Activated B cell treated with CpG ODN at 0.5 μM for 24 hours (primary cell): ENCODE measurements at regions of chr20 and their contacts with region 1.

Region 1: DNA sequence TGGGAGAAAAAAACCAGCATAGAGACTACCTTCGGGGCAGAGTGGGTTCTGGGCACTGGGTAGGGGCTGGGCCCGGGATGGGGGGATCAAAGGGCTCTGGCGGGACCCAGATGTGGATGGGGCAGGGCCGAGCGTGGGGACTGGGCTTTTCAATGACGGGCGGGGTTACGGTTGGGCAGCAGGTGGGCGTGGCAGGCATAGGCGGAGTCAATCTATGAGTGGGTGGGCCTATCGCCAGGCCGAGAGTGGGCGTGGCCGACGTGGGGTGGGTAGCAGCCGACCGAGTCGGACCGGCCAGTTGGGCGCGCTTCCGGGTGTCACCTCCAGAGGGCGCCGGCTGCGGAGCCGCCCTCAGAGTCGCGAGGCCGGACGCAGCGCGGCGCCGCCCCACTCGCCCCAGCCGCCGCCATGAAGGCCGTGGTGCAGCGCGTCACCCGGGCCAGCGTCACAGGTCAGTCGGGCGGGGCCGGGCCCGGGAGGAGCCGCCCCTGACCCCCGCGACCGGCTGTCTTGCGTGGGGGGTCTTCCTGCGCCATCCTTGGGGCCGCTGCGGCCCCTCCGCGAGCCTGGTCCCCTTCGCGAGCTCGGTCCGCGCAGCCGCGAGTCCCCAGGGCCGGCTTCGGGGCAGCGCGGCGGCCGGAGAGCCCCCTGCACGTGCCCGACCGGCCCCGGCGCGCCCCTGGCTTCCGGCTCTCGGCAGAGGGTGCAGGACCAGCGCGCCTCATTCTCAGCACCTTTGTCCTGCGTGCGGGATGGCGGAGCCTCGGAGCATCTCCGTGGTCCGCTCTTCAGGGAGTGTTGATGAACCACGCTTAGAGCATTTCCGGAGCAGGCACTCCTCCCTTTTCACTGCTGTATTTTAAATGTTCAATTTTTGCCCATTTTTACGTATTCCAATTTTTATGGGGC is at the start of gene DTD1:
- DNase-seq: peak; percentile 88
- ATAC-seq: peak; percentile 95
- H3K4me3 Mint-ChIP-seq: peak within 1 kb of the TSS; percentile 93
- H3K27ac Mint-ChIP-seq: peak within 1 kb of the TSS; percentile 90
- H3K4me1 Mint-ChIP-seq: peaks cover 24% of the 10 kb centered on the region
- H3K27me3 Mint-ChIP-seq: peaks cover 9% of the 10 kb centered on the region
- CTCF ChIP-seq: no peak
- total RNA-seq, gene DTD1: 26.3 and 27.5 TPM in 2 replicates

Region 2: DNA sequence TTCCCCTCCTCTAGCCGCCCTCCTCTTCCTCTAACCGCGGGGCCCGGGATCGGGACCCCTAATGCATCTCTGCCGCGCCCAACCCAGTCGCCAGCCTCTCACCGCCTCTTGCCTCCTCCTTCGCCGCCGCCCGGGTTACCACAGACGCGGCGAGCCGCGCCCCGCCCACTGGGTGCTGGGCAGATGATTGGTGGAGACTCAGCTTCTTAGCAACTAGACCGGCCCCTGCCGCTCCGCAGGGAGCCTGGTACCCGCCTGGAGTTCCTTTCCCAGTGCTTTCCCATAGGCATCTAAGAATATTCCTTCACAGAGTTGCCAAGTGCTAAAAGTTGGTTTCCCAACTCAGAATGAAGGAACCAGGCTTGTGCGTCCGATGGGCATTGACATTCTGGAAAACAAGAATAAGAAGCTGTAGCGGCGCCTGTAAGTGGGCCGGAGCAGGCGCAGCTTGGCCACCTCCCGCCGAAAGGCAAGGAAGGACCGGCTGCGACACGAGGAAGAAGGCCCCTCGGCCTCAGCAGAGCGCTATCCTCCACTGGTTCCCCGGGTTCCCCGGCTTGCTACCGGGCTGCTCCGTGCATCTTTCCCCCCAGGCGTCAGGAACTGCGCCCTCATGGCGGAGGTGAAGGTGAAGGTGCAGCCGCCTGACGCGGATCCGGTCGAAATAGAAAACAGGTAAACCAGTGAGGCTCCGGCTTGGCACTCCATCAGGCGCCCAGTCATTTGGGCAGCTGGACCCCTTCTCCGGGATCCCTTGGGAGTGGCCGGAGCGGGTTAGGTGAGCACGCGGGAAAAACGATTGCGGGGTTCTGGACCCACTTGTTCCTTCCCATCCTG is 120.8 kb before region 1 on chr20 and contains the starts of genes DZANK1 and POLR3F:
- CTCF ChIA-PET with region 1: no interaction called
- POLR2A ChIA-PET with region 1: interaction called, 3 read pairs
- intact Hi-C with region 1: loop called (anchors 1 kb)
- DNase-seq: peak; percentile 88
- ATAC-seq: peak; percentile 96
- H3K4me3 Mint-ChIP-seq: peak within 1 kb of the TSS; percentile 99
- H3K27ac Mint-ChIP-seq: peak within 1 kb of the TSS; percentile 95
- H3K4me1 Mint-ChIP-seq: peaks cover 27% of the 10 kb centered on the region
- H3K27me3 Mint-ChIP-seq: no peaks in the 10 kb centered on the region
- CTCF ChIP-seq: no peak
- total RNA-seq, gene DZANK1: 5.3 and 6.0 TPM in 2 replicates
- total RNA-seq, gene POLR3F: 13.3 and 14.5 TPM in 2 replicates

Region 3: DNA sequence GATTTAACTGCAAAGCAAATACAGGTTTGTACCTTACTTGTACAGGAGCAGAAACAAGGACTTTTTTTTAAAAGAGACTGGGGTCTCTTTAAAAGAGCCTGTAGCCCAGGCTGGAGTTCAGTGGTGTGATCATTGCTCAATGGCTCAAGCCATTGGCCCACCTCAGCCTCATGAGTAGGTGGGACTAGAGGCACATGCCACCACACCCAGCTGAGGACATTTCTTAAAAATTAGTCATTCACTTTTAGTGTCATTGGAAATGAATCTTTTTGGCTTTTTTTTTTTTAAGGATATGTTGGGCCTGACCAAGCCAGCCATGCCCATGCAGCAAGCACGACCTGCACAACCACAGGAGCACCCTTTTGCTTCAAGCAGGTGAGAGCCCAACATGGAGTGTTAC is 63.3 kb before region 1 on chr20:
- CTCF ChIA-PET with region 1: no interaction called
- POLR2A ChIA-PET with region 1: no interaction called
- intact Hi-C with region 1: no loop called
- DNase-seq: no peak
- ATAC-seq: no peak
- H3K4me3 Mint-ChIP-seq: no peak overlapping the region
- H3K27ac Mint-ChIP-seq: no peak overlapping the region
- H3K4me1 Mint-ChIP-seq: no peaks in the 10 kb centered on the region
- H3K27me3 Mint-ChIP-seq: no peaks in the 10 kb centered on the region
- CTCF ChIP-seq: no peak

Region 4: GRCh38 chr20:18553746-18554145 is 34.2 kb before region 1 on chr20:
- CTCF ChIA-PET with region 1: no interaction called
- POLR2A ChIA-PET with region 1: no interaction called
- intact Hi-C with region 1: no loop called
- DNase-seq: no peak
- ATAC-seq: no peak
- H3K4me3 Mint-ChIP-seq: no peak overlapping the region
- H3K27ac Mint-ChIP-seq: no peak overlapping the region
- H3K4me1 Mint-ChIP-seq: no peaks in the 10 kb centered on the region
- H3K27me3 Mint-ChIP-seq: no peaks in the 10 kb centered on the region
- CTCF ChIP-seq: no peak

Region 5: GRCh38 chr20:18566892-18567742 is 20.8 kb before region 1 on chr20 and contains the start of gene SMIM26:
- CTCF ChIA-PET with region 1: no interaction called
- POLR2A ChIA-PET with region 1: interaction called, 9 read pairs
- intact Hi-C with region 1: loop called (anchors 1 kb)
- DNase-seq: peak; percentile 91
- ATAC-seq: peak; percentile 96
- H3K4me3 Mint-ChIP-seq: peak within 1 kb of the TSS; percentile 94
- H3K27ac Mint-ChIP-seq: peak within 1 kb of the TSS; percentile 94
- H3K4me1 Mint-ChIP-seq: peaks cover 23% of the 10 kb centered on the region
- H3K27me3 Mint-ChIP-seq: no peaks in the 10 kb centered on the region
- CTCF ChIP-seq: no peak
- total RNA-seq, gene SMIM26: 48.9 and 51.7 TPM in 2 replicates

Region 6: GRCh38 chr20:18728165-18728869 is 140.4 kb after region 1 on chr20:
- CTCF ChIA-PET with region 1: no interaction called
- POLR2A ChIA-PET with region 1: no interaction called
- intact Hi-C with region 1: loop called (anchors 5 kb)
- DNase-seq: peak; percentile 40
- ATAC-seq: peak; percentile 96
- H3K4me3 Mint-ChIP-seq: peak overlapping the region; percentile 64
- H3K27ac Mint-ChIP-seq: peak overlapping the region; percentile 70
- H3K4me1 Mint-ChIP-seq: peaks cover 42% of the 10 kb centered on the region
- H3K27me3 Mint-ChIP-seq: no peaks in the 10 kb centered on the region
- CTCF ChIP-seq: no peak

Region 7: GRCh38 chr20:19688031-19688806 is 1100.3 kb after region 1 on chr20:
- CTCF ChIA-PET with region 1: no interaction called
- POLR2A ChIA-PET with region 1: no interaction called
- intact Hi-C with region 1: no loop called
- DNase-seq: no peak
- ATAC-seq: no peak
- H3K4me3 Mint-ChIP-seq: no peak overlapping the region
- H3K27ac Mint-ChIP-seq: no peak overlapping the region
- H3K4me1 Mint-ChIP-seq: peaks cover 10% of the 10 kb centered on the region
- H3K27me3 Mint-ChIP-seq: peaks cover 12% of the 10 kb centered on the region
- CTCF ChIP-seq: no peak

Region 8: DNA sequence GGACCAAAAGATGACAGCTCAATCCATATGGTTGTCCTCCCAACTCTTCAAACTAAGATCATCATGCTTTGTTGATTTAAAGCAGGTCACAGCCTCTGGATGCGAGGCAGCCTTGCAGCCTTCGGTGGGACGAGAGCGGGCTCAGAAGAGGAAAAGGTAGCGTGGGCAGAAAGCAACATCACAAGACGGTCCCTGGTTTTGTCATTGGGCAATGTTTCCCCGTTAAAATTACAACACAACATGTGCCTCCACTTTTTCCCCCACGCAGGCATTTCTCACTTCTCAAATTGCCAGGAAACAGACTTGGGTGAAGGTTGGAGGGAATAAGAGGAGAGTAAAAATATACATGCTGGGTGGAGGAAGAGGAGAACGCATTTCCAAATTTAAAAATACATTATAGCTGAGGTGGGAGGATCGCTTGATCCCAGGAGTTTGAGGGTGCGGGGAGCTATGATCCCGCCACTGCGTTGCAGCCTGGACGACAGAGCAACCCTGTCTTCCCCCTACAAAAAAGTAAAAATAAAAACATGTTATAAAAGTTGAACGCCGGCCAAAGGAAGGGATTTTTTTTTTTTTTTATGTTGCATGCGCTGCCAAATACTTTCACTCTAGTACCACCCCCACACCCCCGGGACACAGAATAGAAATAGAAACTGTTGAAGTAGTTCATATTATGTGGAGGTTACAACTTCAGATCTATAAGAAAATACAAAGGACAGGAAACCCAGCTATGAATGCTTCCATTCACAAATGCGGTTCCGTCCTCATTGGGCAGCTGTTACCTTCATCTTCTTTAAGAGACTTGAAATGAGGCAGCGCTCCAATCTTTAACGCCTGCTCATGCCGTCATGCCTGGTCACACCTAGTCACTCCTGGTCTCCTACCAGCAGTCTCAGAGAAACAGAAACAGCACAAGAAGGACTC is 1415.4 kb after region 1 on chr20:
- CTCF ChIA-PET with region 1: no interaction called
- POLR2A ChIA-PET with region 1: no interaction called
- intact Hi-C with region 1: no loop called
- DNase-seq: no peak
- ATAC-seq: peak; percentile 42
- H3K4me3 Mint-ChIP-seq: peak overlapping the region; percentile 67
- H3K27ac Mint-ChIP-seq: no peak overlapping the region
- H3K4me1 Mint-ChIP-seq: peaks cover 17% of the 10 kb centered on the region
- H3K27me3 Mint-ChIP-seq: peaks cover 37% of the 10 kb centered on the region
- CTCF ChIP-seq: no peak

Region 9: DNA sequence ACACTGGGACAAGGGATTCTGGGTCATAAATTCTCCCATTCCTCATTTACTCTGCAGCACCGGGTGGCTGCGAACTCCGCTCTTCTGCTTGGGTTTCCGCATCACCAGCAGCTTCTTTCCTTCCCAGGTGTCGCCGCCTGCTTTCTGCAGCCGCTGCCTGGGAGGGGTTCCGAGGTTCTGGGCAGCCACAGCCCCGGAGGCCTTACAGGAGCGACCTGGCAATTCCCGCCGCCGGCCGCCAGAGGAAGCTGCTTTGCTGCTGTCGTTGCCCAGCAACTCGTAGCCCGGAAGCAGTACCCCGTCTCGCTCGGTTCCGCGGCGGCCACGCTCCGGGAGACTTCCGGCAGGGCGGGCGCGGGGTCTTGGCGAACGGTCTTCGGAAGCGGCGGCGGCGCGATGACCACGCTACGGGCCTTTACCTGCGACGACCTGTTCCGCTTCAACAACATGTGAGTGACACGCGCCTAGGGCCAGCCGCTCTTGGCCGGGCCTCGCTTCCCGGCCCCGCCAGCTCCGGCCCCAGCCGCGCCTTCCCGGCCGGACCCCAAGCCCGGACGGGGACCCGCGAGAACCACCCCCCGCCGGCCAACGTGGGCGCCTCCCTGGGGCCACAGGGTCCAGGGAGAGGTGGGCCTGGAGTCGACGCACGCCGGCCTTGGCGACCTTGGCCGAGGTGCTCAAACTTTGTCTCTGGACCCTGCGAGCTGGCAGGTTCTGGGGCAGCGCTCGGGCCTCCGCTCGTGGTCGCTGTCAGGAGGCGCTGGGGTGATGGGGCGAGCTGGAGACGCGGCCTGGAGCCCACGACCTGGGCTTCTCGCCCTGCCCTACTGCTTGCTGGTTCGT is 1429.3 kb after region 1 on chr20 and contains the start of gene NAA20:
- CTCF ChIA-PET with region 1: no interaction called
- POLR2A ChIA-PET with region 1: no interaction called
- intact Hi-C with region 1: loop called (anchors 10 kb)
- DNase-seq: peak; percentile 83
- ATAC-seq: peak; percentile 99
- H3K4me3 Mint-ChIP-seq: peak within 1 kb of the TSS; percentile 91
- H3K27ac Mint-ChIP-seq: peak within 1 kb of the TSS; percentile 90
- H3K4me1 Mint-ChIP-seq: peaks cover 41% of the 10 kb centered on the region
- H3K27me3 Mint-ChIP-seq: no peaks in the 10 kb centered on the region
- CTCF ChIP-seq: no peak
- total RNA-seq, gene NAA20: 44.8 and 47.6 TPM in 2 replicates